ENCODE measurements at regions of chr1 and their contacts with region 1.

Region 1: DNA sequence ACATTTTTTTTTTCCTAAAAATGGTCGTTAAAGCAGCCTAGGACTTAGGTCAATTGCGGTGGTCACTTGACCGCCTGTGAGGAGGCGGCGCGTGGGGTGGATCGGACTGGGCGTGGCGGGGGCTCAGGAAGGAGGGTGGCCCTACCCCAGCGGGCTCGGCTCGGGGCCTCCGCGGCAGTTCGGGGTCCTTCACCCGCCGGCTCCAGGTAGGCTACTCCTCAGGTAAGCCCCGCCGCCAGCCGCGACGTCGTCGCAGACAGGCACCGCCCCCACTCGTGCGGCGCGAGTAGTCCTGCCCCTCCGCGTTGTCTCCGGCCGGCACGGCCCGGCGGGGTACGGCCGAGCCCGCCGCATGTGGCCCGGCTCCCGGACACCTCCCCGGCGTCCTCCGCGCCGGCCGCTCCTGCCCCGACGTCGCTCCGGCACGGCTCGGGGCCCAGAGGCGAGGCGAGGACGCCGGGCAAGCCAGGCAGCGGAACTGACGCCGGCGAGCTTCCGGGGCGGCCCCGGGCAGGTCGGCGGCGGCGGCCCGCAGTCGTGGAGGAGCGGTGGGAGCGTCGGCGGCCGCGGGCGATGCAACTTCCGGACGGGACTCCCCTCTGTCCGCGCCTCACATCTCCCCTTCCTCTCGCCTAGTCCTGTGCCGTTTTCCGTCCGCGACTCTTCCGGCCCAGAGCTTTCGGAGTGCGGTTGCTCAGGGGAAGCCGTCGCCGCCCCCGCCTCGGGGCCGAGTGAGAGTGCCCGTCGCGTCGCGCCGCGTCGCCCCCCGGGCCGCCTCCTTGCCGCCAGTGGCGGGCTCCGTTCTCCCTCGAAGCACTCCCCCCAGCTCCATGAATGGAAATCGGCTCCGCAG is at the start of gene AGO3:
- DNase-seq: peak; percentile 86
- H3K4me3 Mint-ChIP-seq: peak within 1 kb of the TSS; percentile 90
- H3K27ac Mint-ChIP-seq: peak within 1 kb of the TSS; percentile 96
- H3K4me1 Mint-ChIP-seq: peaks cover 27% of the 10 kb centered on the region
- H3K27me3 Mint-ChIP-seq: no peaks in the 10 kb centered on the region
- total RNA-seq, gene AGO3: 21.2 and 26.7 TPM in 2 replicates

Region 2: GRCh38 chr1:35882945-35883634 is 47.7 kb before region 1 on chr1 and contains the start of gene AGO1:
- intact Hi-C with region 1: loop called (anchors 1 kb)
- DNase-seq: peak; percentile 95
- H3K4me3 Mint-ChIP-seq: peak within 1 kb of the TSS; percentile 92
- H3K27ac Mint-ChIP-seq: peak within 1 kb of the TSS; percentile 73
- H3K4me1 Mint-ChIP-seq: peaks cover 41% of the 10 kb centered on the region
- H3K27me3 Mint-ChIP-seq: peaks cover 3% of the 10 kb centered on the region
- total RNA-seq, gene AGO1: 36.9 and 38.6 TPM in 2 replicates

Region 3: GRCh38 chr1:36055706-36056105 is 124.9 kb after region 1 on chr1:
- intact Hi-C with region 1: no loop called
- DNase-seq: no peak
- H3K4me3 Mint-ChIP-seq: no peak overlapping the region
- H3K27ac Mint-ChIP-seq: no peak overlapping the region
- H3K4me1 Mint-ChIP-seq: no peaks in the 10 kb centered on the region
- H3K27me3 Mint-ChIP-seq: no peaks in the 10 kb centered on the region

Region 4: DNA sequence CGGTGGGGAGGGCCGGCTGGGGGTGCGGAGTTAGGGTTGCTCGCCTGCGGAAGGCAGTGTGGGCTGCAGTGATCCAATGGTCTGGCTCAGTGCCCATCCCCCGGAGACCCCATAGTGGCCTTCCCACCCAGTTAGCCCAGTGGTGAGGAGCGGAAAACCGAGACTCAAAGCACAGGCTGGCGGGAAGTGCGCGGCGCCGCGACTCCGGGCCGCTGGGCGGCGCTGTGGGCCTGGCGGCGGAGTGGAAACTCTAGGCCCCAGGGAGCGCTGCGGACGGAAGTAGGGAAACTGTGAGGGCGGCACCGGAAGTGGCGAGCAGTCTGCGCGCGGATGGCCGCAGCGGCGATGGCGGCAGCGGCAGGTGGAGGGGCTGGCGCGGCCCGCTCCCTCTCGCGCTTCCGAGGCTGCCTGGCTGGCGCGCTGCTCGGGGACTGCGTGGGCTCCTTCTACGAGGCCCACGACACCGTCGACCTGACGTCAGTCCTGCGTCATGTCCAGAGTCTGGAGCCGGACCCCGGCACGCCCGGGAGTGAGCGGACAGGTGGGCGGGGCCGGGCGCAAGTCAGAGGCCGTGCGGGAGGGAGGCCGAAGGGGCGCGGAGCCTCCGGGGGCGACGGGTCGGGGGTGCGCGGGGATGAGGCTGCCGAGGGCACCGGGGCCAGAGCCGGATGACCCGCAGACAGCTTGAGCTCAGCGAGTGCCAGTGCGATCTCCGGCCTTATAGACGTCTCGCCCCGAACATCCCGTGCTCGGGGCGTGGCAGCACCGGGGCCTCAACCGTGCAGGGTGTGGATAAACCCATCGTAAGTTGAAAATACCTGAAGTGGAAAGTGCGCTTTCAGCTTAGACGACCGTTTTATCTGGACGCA is 158.0 kb after region 1 on chr1 and contains the start of gene ADPRS:
- intact Hi-C with region 1: loop called (anchors 1 kb)
- DNase-seq: peak; percentile 89
- H3K4me3 Mint-ChIP-seq: peak within 1 kb of the TSS; percentile 90
- H3K27ac Mint-ChIP-seq: peak within 1 kb of the TSS; percentile 83
- H3K4me1 Mint-ChIP-seq: peaks cover 9% of the 10 kb centered on the region
- H3K27me3 Mint-ChIP-seq: peaks cover 3% of the 10 kb centered on the region
- total RNA-seq, gene ADPRS: 33.6 and 35.3 TPM in 2 replicates

Measured in activated T-helper 2 cell treated with anti-CD3 and anti-CD28 coated beads, Interferon-gamma antibody, Interleukin-2, Interleukin-4, amounts not matched to agents 10 μg/mL and 5 μg/mL and 100 μg/mL, durations not matched to agents 14 hours and 24 hours and 36 hours (primary cell).